ENCODE measurements at regions of chr3 and their contacts with region 1.

Region 1: DNA sequence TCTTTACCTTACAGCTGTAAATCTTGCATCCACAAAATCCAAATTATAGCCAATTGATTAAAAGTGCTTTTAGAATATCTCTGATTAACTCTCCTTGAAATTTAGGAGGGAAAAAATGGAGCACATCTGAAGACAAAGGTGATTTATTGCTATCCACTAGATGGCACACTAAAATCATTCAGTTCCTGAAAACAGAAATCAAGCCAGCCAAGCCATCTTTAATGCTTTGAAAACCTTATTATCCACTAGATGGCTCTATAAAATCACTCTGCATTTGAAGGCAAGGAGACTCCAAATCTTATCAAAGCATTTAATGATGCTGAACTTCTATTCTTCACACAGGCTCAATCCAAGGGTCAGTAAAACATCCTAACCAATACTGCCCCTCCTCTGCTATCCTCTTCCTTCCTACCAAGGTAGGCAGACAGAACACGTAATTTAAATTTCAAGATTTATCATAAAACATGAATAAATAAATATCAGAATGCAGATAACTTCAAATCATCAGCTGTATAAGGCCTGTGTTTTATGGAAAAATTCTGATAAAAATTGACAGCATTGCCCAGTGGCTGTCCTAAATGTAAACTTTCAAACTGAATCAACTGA is 48.4 kb downstream of the GOLIM4 start:
- DNase-seq: peak; percentile 79
- ATAC-seq: peak; percentile 84
- H3K4me3 ChIP-seq: no peak overlapping the region
- H3K27ac ChIP-seq: no peak overlapping the region
- H3K4me1 ChIP-seq: no peaks in the 10 kb centered on the region
- H3K27me3 ChIP-seq: no peaks in the 10 kb centered on the region
- CTCF ChIP-seq: peak; percentile 68 to 99 (median 89)
- POLR2A ChIP-seq: no peak
- RAD21 ChIP-seq: peak; percentile 97

Region 2: DNA sequence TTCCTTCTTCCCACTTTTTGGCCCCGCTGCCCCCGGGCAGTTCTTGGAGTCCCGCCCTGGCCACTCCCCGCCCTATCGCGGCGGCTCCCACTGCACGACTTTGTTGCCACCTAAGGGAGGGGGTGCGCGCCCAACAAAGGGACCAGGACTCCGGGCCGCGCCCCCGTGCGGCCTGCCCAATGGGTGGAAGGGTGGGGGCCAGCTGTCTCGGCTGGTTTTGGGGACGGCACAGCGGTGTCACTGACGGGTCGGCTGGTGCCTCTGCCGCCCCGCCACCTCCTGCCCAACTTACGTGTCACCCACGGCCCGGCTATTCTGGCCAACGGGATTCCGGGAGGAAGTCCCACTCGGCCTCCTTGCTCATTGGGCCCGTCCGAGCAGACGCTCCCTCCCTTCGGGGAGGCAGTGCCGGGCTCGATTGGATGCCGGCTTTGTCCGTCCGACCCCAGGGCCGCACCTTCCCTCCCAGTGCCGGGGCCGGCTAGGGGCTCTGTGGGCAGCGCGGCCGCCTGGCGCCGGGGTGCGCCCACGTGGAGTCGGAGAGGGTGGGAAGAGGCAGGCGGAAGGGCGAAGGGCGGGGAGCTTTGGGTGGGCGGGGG is 48.4 kb after region 1 on chr3 and contains the start of gene GOLIM4:
- CTCF ChIA-PET with region 1: no interaction called
- POLR2A ChIA-PET with region 1: no interaction called
- RAD21 ChIA-PET with region 1: no interaction called
- intact Hi-C with region 1: loop called (anchors 2 kb)
- DNase-seq: peak; percentile 92
- ATAC-seq: peak; percentile 90
- H3K4me3 ChIP-seq: peak within 1 kb of the TSS; percentile 63 to 71
- H3K27ac ChIP-seq: peak within 1 kb of the TSS; percentile 86
- H3K4me1 ChIP-seq: peaks cover 36 to 42% of the 10 kb centered on the region in 2 experiments
- H3K27me3 ChIP-seq: no peaks in the 10 kb centered on the region
- CTCF ChIP-seq: no peak
- POLR2A ChIP-seq: no peak
- RAD21 ChIP-seq: no peak
- total RNA-seq, gene GOLIM4: 10.6 TPM

Region 3: DNA sequence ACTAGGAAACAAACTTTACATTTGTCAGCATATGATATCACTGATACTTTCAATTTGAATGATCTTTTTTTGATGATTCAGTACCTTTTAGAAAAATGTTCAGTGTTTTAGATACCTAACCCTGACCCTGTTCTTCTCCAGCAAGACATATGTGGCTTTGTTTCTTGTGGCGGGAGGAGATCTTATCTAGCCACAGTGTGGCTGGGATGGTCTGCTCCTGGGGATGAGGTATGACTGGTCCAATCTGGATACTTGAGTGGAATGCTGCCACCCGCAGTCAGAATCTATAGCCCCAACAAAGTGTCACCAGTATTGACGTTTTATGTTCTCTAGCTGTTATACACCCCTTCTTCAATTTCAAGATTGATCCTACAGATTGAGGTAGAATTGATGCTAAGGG is 487.5 kb after region 1 on chr3:
- CTCF ChIA-PET with region 1: no interaction called
- POLR2A ChIA-PET with region 1: no interaction called
- RAD21 ChIA-PET with region 1: no interaction called
- intact Hi-C with region 1: no loop called
- DNase-seq: no peak
- ATAC-seq: no peak
- H3K4me3 ChIP-seq: no peak overlapping the region
- H3K27ac ChIP-seq: no peak overlapping the region
- H3K4me1 ChIP-seq: no peaks in the 10 kb centered on the region
- H3K27me3 ChIP-seq: peaks cover 14% of the 10 kb centered on the region; the same call in 1 of the 2 replicates
- CTCF ChIP-seq: no peak
- POLR2A ChIP-seq: no peak
- RAD21 ChIP-seq: no peak

Region 4: GRCh38 chr3:168615493-168616020 is 568.3 kb after region 1 on chr3:
- CTCF ChIA-PET with region 1: no interaction called
- POLR2A ChIA-PET with region 1: no interaction called
- RAD21 ChIA-PET with region 1: no interaction called
- intact Hi-C with region 1: loop called (anchors 5 kb)
- DNase-seq: no peak
- ATAC-seq: no peak
- H3K4me3 ChIP-seq: no peak overlapping the region
- H3K27ac ChIP-seq: no peak overlapping the region
- H3K4me1 ChIP-seq: no peaks in the 10 kb centered on the region
- H3K27me3 ChIP-seq: peaks cover 13% of the 10 kb centered on the region; the same call in 1 of the 2 replicates
- CTCF ChIP-seq: no peak
- POLR2A ChIP-seq: no peak
- RAD21 ChIP-seq: no peak

Measured in HCT116 (cell line).